ENCODE measurements at regions of chr11 and their contacts with region 1.

Region 1: DNA sequence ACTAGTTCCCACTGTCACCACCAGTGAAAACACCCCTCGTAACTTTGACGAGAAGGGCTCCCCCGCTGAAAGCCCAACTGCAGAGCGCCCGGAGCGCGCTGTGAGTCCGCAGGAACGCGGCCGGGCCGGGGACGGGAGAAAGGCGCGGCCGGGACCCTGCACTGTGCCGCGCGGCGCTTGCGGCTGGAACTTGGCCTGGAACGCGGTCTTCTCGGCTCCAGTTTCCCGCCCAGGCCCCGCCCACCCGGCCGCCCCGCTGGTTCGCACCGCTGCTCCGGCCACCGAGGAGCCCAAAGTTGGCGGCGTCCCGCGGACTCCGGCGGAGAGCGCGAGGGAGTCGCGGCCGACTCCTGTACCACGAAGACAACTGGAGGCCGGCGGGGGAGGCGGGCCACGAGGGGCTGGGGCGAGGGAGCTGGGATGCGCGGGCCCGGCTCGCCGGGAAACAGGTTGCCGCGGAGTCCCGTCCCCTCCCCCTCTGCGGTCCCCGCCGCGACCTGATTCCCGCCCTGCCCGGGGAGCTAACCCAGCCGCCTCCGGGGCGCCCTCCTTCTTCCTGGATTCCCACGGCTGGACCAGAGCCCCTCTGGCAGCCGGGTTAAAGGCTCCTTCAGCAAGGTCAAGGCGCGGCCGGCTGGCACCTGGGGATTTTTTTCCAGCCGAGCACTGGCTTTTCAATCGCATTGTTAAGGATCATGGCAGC is 3.4 kb downstream of the TENM4 start:
- DNase-seq: peak; percentile 82 to 91 (median 84)
- H3K4me3 ChIP-seq: peak overlapping the region; percentile 63
- H3K27ac ChIP-seq: peak overlapping the region; percentile 70 to 84
- H3K4me1 ChIP-seq: peaks cover 9% of the 10 kb centered on the region
- H3K27me3 ChIP-seq: no peaks in the 10 kb centered on the region
- CTCF ChIP-seq: no peak
- EP300 ChIP-seq: no peak
- POLR2A ChIP-seq: no peak

Region 2: GRCh38 chr11:79173615-79174014 is 263.8 kb before region 1 on chr11:
- intact Hi-C with region 1: loop called in 1 of 4 experiments (anchors 5 kb)
- DNase-seq: peak in 4 of 5 donors; percentile 33 to 61 (median 40)
- H3K4me3 ChIP-seq: no peak overlapping the region
- H3K27ac ChIP-seq: peak overlapping the region in 1 of 2 donors; percentile 53
- H3K4me1 ChIP-seq: peaks cover 7% of the 10 kb centered on the region
- H3K27me3 ChIP-seq: no peaks in the 10 kb centered on the region
- CTCF ChIP-seq: no peak
- EP300 ChIP-seq: no peak
- POLR2A ChIP-seq: no peak

Region 3: GRCh38 chr11:79236541-79236971 is 200.9 kb before region 1 on chr11:
- intact Hi-C with region 1: loop called in 2 of 4 experiments (anchors 10 kb)
- DNase-seq: no peak
- H3K4me3 ChIP-seq: no peak overlapping the region
- H3K27ac ChIP-seq: peak overlapping the region; percentile 16 to 71
- H3K4me1 ChIP-seq: peaks cover 21% of the 10 kb centered on the region
- H3K27me3 ChIP-seq: no peaks in the 10 kb centered on the region
- CTCF ChIP-seq: no peak
- EP300 ChIP-seq: no peak
- POLR2A ChIP-seq: no peak

Region 4: GRCh38 chr11:79244241-79244772 is 193.1 kb before region 1 on chr11:
- intact Hi-C with region 1: loop called in 2 of 4 experiments (anchors 10 kb)
- DNase-seq: peak in 1 of 5 donors; percentile 56
- H3K4me3 ChIP-seq: no peak overlapping the region
- H3K27ac ChIP-seq: peak overlapping the region; percentile 26 to 63
- H3K4me1 ChIP-seq: peaks cover 19% of the 10 kb centered on the region
- H3K27me3 ChIP-seq: no peaks in the 10 kb centered on the region
- CTCF ChIP-seq: no peak
- EP300 ChIP-seq: no peak
- POLR2A ChIP-seq: no peak

Measured in ovary (tissue), 10 donors.